A549 (cell line): ENCODE measurements at regions of chr2 and their contacts with region 1.

Region 1: DNA sequence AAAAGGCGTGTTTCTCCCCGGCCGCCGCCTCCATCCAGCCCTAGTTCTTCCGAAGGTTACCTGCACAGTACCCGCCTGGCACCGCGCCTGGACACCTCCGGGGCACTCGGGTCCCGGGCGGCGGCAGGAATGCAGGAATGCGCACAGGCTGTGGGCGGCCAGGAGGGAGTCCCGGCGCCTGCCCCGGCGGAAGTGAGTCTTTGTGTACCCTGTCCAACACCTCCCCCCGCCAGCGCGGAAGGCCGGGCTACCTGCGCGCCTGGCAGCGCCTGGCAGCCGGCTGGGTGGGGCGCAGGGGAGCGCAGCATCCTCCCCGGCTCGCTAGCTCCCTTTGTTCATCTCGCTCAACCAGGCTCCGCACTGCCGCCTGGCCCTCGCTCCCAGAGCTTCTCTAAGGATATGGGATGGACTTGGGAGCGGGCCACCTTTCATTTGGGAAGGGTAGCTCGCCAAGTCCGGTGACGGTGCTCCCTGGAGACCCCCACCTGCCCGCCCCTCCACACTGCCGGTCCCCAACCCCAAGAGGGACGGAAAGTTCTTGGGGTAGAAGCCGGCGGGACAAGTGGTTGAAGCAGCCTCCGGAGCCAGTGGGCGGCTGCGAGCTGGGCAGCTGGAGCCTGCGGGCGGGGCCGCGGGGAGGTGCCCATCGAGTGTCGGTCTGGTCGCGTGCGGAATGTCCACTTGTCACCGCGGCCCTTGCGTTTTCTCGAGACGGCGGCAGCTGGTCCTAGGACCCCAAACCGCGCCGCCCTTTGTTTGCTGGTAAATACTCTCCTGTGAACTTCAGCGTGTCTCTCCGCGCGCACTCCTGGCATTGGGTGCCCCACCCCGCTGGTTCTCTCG is 1.2 kb upstream of the ST6GAL2 start:
- DNase-seq: peak; percentile 34 to 91
- ATAC-seq: peak; percentile 84 to 87
- H3K4me3 ChIP-seq: peak overlapping the region; percentile 78
- H3K27ac ChIP-seq: peak overlapping the region; percentile 97
- H3K4me1 ChIP-seq: peaks cover 33% of the 10 kb centered on the region
- CTCF ChIP-seq: no peak
- EP300 ChIP-seq: peak; percentile 44 to 58; a peak in 2 of 5 replicates
- POLR2A ChIP-seq: no peak; the same call in none of the 2 replicates
- RAD21 ChIP-seq: peak in 1 of 2 experiments; percentile 37; a peak in 4 of 5 replicates

Region 2: GRCh38 chr2:106919012-106919411 is 31.9 kb after region 1 on chr2:
- CTCF ChIA-PET with region 1: no interaction called
- POLR2A ChIA-PET with region 1: no interaction called
- DNase-seq: no peak
- ATAC-seq: no peak
- H3K4me3 ChIP-seq: no peak overlapping the region
- H3K27ac ChIP-seq: no peak overlapping the region
- H3K4me1 ChIP-seq: no peaks in the 10 kb centered on the region
- CTCF ChIP-seq: no peak
- EP300 ChIP-seq: no peak
- POLR2A ChIP-seq: no peak
- RAD21 ChIP-seq: no peak

Region 3: DNA sequence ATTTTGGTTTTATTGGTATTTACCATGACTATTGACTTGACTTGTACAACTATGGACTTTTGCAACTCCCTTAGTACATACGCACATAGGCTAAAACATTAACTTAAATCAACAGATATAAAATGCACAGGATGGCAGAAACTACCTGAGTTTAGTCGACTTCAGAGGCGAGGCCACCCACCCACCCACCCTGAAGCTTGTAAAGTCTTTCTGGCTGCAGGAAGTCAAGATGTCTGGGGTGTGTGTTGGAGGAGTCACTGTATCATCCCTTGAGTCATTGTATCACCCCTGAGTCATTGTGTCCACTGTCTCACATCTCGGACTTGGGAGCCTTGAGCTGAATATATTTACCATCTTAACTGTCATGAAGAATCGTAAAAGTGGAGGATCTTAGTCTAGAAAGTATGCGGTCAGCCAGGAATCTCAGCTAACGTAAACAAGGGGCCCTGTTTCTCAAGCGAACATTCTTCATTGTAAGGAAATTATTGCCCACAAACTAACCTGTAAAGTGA is 138.8 kb after region 1 on chr2:
- CTCF ChIA-PET with region 1: no interaction called
- POLR2A ChIA-PET with region 1: interaction called, 17 read pairs
- DNase-seq: peak; percentile 69 to 99
- ATAC-seq: peak; percentile 94 to 96
- H3K4me3 ChIP-seq: no peak overlapping the region
- H3K27ac ChIP-seq: peak overlapping the region; percentile 95 to 96
- H3K4me1 ChIP-seq: peaks cover 45% of the 10 kb centered on the region
- CTCF ChIP-seq: no peak
- EP300 ChIP-seq: peak; percentile 98 to 99
- POLR2A ChIP-seq: no peak
- RAD21 ChIP-seq: peak; percentile 42 to 73